ENCODE measurements at regions of chr11 and their contacts with region 1.

Region 1: GRCh38 chr11:34105079-34105956 is at the start of gene NAT10:
- DNase-seq: peak; percentile 91
- ATAC-seq: peak; percentile 92
- H3K4me3 Mint-ChIP-seq: peak within 1 kb of the TSS; percentile 97
- H3K27ac Mint-ChIP-seq: peak within 1 kb of the TSS; percentile 98
- H3K4me1 Mint-ChIP-seq: peaks cover 41% of the 10 kb centered on the region
- H3K27me3 Mint-ChIP-seq: peaks cover 2% of the 10 kb centered on the region
- CTCF ChIP-seq: no peak
- total RNA-seq, gene NAT10: 107 and 120 TPM in 2 replicates

Region 2: GRCh38 chr11:34086554-34087283 is 18.6 kb before region 1 on chr11:
- CTCF ChIA-PET with region 1: no interaction called
- POLR2A ChIA-PET with region 1: interaction called, 3 read pairs
- intact Hi-C with region 1: loop called (anchors 2 kb)
- DNase-seq: no peak
- ATAC-seq: peak; percentile 10
- H3K4me3 Mint-ChIP-seq: no peak overlapping the region
- H3K27ac Mint-ChIP-seq: no peak overlapping the region
- H3K4me1 Mint-ChIP-seq: peaks cover 5% of the 10 kb centered on the region
- H3K27me3 Mint-ChIP-seq: no peaks in the 10 kb centered on the region
- CTCF ChIP-seq: no peak

Region 3: DNA sequence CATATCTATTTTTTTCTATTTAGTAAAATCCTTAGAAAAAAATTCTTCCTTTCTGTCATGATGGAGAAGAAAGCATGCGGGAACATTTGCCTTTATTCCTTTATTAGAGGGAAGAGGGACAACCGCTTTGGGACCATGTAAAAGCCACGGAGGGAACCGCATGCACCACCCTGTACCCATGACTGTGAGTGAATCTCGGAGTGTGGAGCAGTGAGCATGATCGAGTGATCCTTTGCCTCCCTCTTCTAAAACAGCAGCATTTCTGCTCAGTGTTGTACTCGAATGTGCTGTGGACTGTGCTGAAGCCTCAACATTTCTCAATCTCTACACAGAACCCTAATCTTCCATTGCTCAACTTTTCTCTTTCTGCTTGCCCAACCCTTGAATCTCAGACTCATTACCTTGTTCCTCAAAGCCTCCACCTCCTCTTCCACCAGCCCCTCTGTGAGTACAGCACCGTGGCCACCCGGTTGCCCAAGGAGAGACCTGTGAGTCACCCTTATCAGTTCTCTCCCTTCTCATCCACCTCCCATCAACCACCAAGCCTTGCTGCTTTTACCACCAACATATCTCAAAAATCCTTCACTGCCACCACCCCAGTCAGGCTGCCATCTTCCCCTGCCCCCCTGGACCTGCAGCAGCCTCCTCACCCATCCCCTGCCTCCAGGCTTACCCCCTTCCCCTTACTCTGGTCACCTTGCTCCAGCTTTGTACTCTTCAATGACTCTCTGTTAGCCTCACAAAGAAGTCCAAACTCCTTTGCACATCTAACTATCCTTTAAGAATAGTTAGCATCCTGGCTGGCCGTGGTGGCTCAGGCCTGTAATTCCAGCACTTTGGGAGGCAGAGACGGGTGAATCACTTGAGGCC is 103.2 kb after region 1 on chr11:
- CTCF ChIA-PET with region 1: no interaction called
- POLR2A ChIA-PET with region 1: no interaction called
- intact Hi-C with region 1: no loop called
- DNase-seq: no peak
- ATAC-seq: peak; percentile 83
- H3K4me3 Mint-ChIP-seq: no peak overlapping the region
- H3K27ac Mint-ChIP-seq: peak overlapping the region; percentile 10
- H3K4me1 Mint-ChIP-seq: peaks cover 32% of the 10 kb centered on the region
- H3K27me3 Mint-ChIP-seq: no peaks in the 10 kb centered on the region
- CTCF ChIP-seq: no peak

Region 4: GRCh38 chr11:34585735-34586487 is 480.6 kb after region 1 on chr11:
- CTCF ChIA-PET with region 1: no interaction called
- POLR2A ChIA-PET with region 1: no interaction called
- intact Hi-C with region 1: no loop called
- DNase-seq: peak; percentile 25
- ATAC-seq: peak; percentile 92
- H3K4me3 Mint-ChIP-seq: peak overlapping the region; percentile 29
- H3K27ac Mint-ChIP-seq: peak overlapping the region; percentile 77
- H3K4me1 Mint-ChIP-seq: peaks cover 25% of the 10 kb centered on the region
- H3K27me3 Mint-ChIP-seq: no peaks in the 10 kb centered on the region
- CTCF ChIP-seq: peak; percentile 18

Region 5: GRCh38 chr11:34599406-34599901 is 494.1 kb after region 1 on chr11:
- CTCF ChIA-PET with region 1: no interaction called
- POLR2A ChIA-PET with region 1: no interaction called
- intact Hi-C with region 1: no loop called
- DNase-seq: no peak
- ATAC-seq: no peak
- H3K4me3 Mint-ChIP-seq: no peak overlapping the region
- H3K27ac Mint-ChIP-seq: no peak overlapping the region
- H3K4me1 Mint-ChIP-seq: peaks cover 5% of the 10 kb centered on the region
- H3K27me3 Mint-ChIP-seq: no peaks in the 10 kb centered on the region
- CTCF ChIP-seq: no peak

Measured in activated B cell treated with CpG ODN at 0.5 μM for 24 hours (primary cell).